CD14-positive monocyte (primary cell): ENCODE measurements at regions of chr18 and their contacts with region 1.

Region 1: GRCh38 chr18:24726727-24727492 is 266.5 kb downstream of the HRH4 start:
- DNase-seq: peak; percentile 15 to 36 (median 30)
- H3K4me3 ChIP-seq: no peak overlapping the region
- H3K4me3 Mint-ChIP-seq: no peak overlapping the region
- H3K27ac ChIP-seq: no peak overlapping the region
- H3K27ac Mint-ChIP-seq: no peak overlapping the region
- H3K4me1 ChIP-seq: no peaks in the 10 kb centered on the region
- H3K4me1 Mint-ChIP-seq: peaks cover 5% of the 10 kb centered on the region
- H3K27me3 ChIP-seq: no peaks in the 10 kb centered on the region
- H3K27me3 Mint-ChIP-seq: peaks cover 0 to 2% (median 2%) of the 10 kb centered on the region in 3 donors
- CTCF ChIP-seq: peak; percentile 88

Region 2: GRCh38 chr18:24380163-24380747 is 346.7 kb before region 1 on chr18:
- intact Hi-C with region 1: no loop called
- DNase-seq: no peak
- H3K4me3 ChIP-seq: no peak overlapping the region
- H3K4me3 Mint-ChIP-seq: no peak overlapping the region
- H3K27ac ChIP-seq: peak overlapping the region in 1 of 2 donors; percentile 26
- H3K27ac Mint-ChIP-seq: peak overlapping the region in 4 of 7 donors; percentile 4 to 49 (median 30)
- H3K4me1 ChIP-seq: peaks cover 5 to 6% of the 10 kb centered on the region in 2 donors
- H3K4me1 Mint-ChIP-seq: peaks cover 12% of the 10 kb centered on the region
- H3K27me3 ChIP-seq: no peaks in the 10 kb centered on the region
- H3K27me3 Mint-ChIP-seq: peaks cover 0 to 2% (median 0%) of the 10 kb centered on the region in 3 donors
- CTCF ChIP-seq: no peak

Region 3: DNA sequence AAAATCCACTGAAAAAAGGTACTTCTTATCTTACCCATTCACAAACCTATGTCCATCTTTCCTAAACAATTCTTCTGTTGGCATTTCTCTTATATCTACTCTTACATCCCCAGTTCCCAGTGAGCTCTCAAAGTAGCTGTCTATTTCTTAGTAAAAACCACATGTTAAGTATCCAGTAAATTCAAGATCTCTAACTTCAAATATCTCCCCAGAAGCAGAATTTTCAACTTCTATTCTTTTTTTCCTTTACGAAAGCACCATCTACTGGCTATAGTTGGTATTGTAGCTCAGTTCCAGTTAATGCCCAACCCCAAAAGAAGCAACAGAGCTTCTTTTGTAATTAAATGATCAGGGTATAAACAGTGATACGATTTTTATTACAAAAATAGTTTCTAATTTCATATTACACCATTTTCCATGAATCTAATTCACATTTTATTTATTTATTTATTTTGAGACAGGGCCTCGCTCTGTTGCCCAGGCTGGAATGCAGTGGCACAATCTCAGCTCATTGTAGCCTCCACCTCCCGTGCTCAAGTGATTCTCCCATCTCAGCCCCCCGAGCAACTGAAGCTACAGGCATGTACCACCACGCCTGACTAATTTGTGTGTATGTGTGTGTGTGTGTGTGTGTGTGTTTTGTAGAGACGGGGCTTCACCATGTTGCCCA is 238.0 kb before region 1 on chr18:
- intact Hi-C with region 1: loop called in 1 of 2 experiments (anchors 5 kb)
- DNase-seq: peak in 2 of 3 donors; percentile 25 to 46
- H3K4me3 ChIP-seq: no peak overlapping the region
- H3K4me3 Mint-ChIP-seq: no peak overlapping the region
- H3K27ac ChIP-seq: no peak overlapping the region
- H3K27ac Mint-ChIP-seq: no peak overlapping the region
- H3K4me1 ChIP-seq: no peaks in the 10 kb centered on the region
- H3K4me1 Mint-ChIP-seq: peaks cover 21% of the 10 kb centered on the region
- H3K27me3 ChIP-seq: no peaks in the 10 kb centered on the region
- H3K27me3 Mint-ChIP-seq: peaks cover 0 to 6% (median 0%) of the 10 kb centered on the region in 3 donors
- CTCF ChIP-seq: peak; percentile 89

Region 4: DNA sequence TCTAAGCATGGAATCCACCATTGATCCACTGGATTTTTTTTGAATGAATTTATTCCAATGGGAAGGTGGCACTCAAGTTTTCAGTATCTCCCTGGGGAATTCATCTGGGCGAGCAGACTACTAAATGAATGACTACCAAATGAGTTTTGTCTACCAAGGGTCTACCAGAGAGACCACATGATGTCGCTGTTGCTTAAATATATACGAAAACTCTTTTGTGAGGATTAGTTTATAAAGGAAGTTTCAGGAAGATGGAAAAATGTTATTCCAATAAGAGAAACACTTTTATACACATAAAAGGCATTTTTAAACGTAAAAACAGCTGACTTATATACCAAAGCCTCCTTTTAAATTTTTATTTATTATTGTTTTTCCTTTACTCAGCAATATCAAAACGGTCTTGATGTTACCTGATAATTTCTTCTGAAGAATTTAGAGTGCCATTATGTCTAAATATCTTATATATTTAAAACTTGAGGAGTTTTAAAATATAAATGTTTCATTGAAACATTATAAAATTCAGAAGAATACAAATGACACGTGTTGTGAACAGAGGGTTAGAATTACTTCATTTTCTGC is 126.7 kb before region 1 on chr18:
- intact Hi-C with region 1: loop called in 1 of 2 experiments (anchors 10 kb)
- DNase-seq: peak in 1 of 3 donors; percentile 2
- H3K4me3 ChIP-seq: no peak overlapping the region
- H3K4me3 Mint-ChIP-seq: no peak overlapping the region
- H3K27ac ChIP-seq: no peak overlapping the region
- H3K27ac Mint-ChIP-seq: no peak overlapping the region
- H3K4me1 ChIP-seq: no peaks in the 10 kb centered on the region
- H3K4me1 Mint-ChIP-seq: no peaks in the 10 kb centered on the region
- H3K27me3 ChIP-seq: no peaks in the 10 kb centered on the region
- H3K27me3 Mint-ChIP-seq: peaks cover 0 to 2% (median 2%) of the 10 kb centered on the region in 3 donors
- CTCF ChIP-seq: peak; percentile 50